ENCODE measurements at regions of chr3 and their contacts with region 1.

Region 1: DNA sequence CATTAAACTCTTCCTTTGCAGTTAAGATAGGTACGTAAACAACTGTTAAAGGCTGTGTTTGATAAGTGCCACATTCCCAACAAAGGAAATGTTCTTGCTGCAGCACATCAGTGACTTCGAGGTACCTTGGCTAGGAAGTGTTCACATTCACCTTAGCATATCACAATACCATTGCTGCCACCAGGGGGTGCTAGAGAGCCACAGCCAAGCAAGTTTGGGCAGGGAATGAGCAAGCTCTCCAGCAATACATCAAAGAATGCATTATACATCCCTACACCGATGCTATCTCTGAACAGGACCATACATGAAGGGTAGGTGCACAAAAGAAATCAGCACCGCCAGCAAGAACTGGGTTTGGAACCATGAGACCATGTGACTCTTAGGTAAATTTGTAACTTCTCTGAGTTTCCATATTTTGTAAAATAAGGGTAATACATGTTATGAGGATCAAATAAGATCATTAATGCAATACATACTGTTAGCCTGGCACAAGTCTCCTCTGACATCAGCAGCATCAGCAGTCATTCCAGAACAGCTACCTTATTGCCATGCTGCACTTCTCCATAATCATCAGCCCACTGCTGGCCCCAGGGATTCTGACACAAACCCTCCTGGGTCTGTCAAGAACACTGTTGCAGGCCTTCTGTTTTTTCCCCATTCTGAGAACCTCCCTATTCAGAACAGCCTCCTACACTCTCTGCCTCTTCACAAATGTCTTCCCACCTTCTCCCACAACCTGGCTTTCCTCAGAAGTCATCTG is 37.6 kb downstream of the RYK start:
- DNase-seq: peak; percentile 71 to 95 (median 83)
- ATAC-seq: peak; percentile 91
- H3K4me3 ChIP-seq: no peak overlapping the region
- H3K4me3 Mint-ChIP-seq: no peak overlapping the region
- H3K27ac ChIP-seq: no peak overlapping the region
- H3K27ac Mint-ChIP-seq: no peak overlapping the region
- H3K4me1 ChIP-seq: no peaks in the 10 kb centered on the region
- H3K4me1 Mint-ChIP-seq: peaks cover 38% of the 10 kb centered on the region
- H3K27me3 ChIP-seq: no peaks in the 10 kb centered on the region
- H3K27me3 Mint-ChIP-seq: no peaks in the 10 kb centered on the region
- CTCF ChIP-seq: peak; percentile 93

Region 2: DNA sequence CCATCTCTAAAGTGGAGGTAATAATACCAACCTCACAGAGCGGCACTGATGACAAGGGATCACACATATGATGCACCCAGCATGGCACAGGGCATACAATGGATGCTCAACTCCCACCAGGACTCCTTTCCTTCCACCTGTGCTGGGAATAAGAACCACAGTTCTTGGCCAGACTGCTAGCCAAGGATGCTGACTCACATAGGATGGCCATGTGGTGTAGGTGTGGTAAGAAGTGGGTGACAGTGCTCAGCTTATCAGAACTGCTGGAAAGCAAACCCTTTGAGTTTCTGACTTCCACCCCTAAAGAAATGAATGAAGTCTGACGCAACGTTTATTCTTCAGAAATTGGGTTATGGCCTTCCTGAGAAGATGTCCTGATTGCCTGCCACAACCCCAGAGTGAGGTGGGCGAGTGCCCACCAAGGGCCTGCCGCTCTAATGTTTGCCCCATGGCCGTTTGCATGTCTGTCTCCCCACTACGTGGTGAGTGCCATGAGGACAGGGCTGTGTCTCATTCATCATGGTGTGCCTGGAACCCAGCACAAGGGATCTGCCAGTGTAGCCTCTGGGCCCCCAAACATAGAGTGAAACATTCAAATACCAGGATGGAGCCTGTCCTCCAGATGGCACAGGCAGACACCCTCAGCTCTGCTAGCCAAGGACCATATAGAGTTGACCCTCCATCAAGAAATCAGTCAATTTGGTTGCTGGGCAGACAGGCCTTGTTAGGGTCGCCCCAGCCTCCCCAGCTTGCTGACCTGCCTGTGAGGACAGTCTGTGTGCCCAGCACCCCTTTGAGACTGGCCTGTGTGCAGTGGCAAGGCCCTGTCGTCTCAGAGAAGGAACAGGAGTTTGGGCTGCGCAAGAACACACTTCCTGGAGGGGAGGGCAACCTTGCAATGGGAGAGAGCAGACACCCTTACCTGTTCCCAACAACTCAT is 125.8 kb before region 1 on chr3:
- CTCF ChIA-PET with region 1: no interaction called
- POLR2A ChIA-PET with region 1: no interaction called
- intact Hi-C with region 1: no loop called
- DNase-seq: no peak
- ATAC-seq: no peak
- H3K4me3 ChIP-seq: no peak overlapping the region
- H3K4me3 Mint-ChIP-seq: no peak overlapping the region
- H3K27ac ChIP-seq: no peak overlapping the region
- H3K27ac Mint-ChIP-seq: no peak overlapping the region
- H3K4me1 ChIP-seq: no peaks in the 10 kb centered on the region
- H3K4me1 Mint-ChIP-seq: no peaks in the 10 kb centered on the region
- H3K27me3 ChIP-seq: no peaks in the 10 kb centered on the region
- H3K27me3 Mint-ChIP-seq: no peaks in the 10 kb centered on the region
- CTCF ChIP-seq: no peak

Region 3: GRCh38 chr3:134111616-134112015 is 101.5 kb before region 1 on chr3:
- CTCF ChIA-PET with region 1: no interaction called
- POLR2A ChIA-PET with region 1: no interaction called
- intact Hi-C with region 1: no loop called
- DNase-seq: no peak
- ATAC-seq: no peak
- H3K4me3 ChIP-seq: no peak overlapping the region
- H3K4me3 Mint-ChIP-seq: no peak overlapping the region
- H3K27ac ChIP-seq: no peak overlapping the region
- H3K27ac Mint-ChIP-seq: no peak overlapping the region
- H3K4me1 ChIP-seq: no peaks in the 10 kb centered on the region
- H3K4me1 Mint-ChIP-seq: peaks cover 5% of the 10 kb centered on the region
- H3K27me3 ChIP-seq: no peaks in the 10 kb centered on the region
- H3K27me3 Mint-ChIP-seq: peaks cover 7% of the 10 kb centered on the region
- CTCF ChIP-seq: no peak

Region 4: DNA sequence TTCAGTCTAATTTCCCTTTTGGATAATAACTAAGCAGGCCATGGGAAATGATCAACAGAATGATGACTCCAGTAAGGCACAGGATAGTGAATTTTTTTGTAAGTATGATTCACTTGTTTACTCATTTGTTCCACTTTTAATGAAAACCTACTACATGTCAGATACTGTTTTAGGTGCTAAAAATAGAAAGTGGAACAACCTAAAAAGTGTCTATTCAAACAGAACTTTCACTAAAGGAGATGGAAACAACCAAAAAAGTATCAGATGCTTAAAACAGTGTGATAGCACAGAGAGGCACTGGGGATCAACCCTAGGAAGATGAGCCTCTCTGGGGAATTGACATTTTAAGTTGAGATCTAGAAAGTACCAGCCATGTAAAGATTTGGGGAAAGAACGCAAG is 26.5 kb after region 1 on chr3:
- CTCF ChIA-PET with region 1: interaction called, 11 read pairs
- POLR2A ChIA-PET with region 1: no interaction called
- intact Hi-C with region 1: no loop called
- DNase-seq: no peak
- ATAC-seq: no peak
- H3K4me3 ChIP-seq: no peak overlapping the region
- H3K4me3 Mint-ChIP-seq: no peak overlapping the region
- H3K27ac ChIP-seq: no peak overlapping the region
- H3K27ac Mint-ChIP-seq: peak overlapping the region; percentile 30
- H3K4me1 ChIP-seq: peaks cover 28% of the 10 kb centered on the region
- H3K4me1 Mint-ChIP-seq: peaks cover 85% of the 10 kb centered on the region
- H3K27me3 ChIP-seq: no peaks in the 10 kb centered on the region
- H3K27me3 Mint-ChIP-seq: no peaks in the 10 kb centered on the region
- CTCF ChIP-seq: no peak

Region 5: GRCh38 chr3:134299185-134299887 is 86.2 kb after region 1 on chr3:
- CTCF ChIA-PET with region 1: interaction called, 17 read pairs
- POLR2A ChIA-PET with region 1: no interaction called
- intact Hi-C with region 1: loop called (anchors 1 to 5 kb)
- DNase-seq: no peak
- ATAC-seq: no peak
- H3K4me3 ChIP-seq: no peak overlapping the region
- H3K4me3 Mint-ChIP-seq: no peak overlapping the region
- H3K27ac ChIP-seq: no peak overlapping the region
- H3K27ac Mint-ChIP-seq: no peak overlapping the region
- H3K4me1 ChIP-seq: peaks cover 10% of the 10 kb centered on the region
- H3K4me1 Mint-ChIP-seq: no peaks in the 10 kb centered on the region
- H3K27me3 ChIP-seq: no peaks in the 10 kb centered on the region
- H3K27me3 Mint-ChIP-seq: peaks cover 17% of the 10 kb centered on the region
- CTCF ChIP-seq: no peak

Region 6: GRCh38 chr3:134373994-134374790 is 161.1 kb after region 1 on chr3 and contains the start of gene AMOTL2:
- CTCF ChIA-PET with region 1: interaction called, 13 read pairs
- POLR2A ChIA-PET with region 1: no interaction called
- intact Hi-C with region 1: loop called in 1 of 2 experiments (anchors 1 kb)
- DNase-seq: peak in 1 of 9 experiments; percentile 18
- ATAC-seq: no peak
- H3K4me3 ChIP-seq: peak within 1 kb of the TSS; percentile 8 to 30
- H3K4me3 Mint-ChIP-seq: peak within 1 kb of the TSS; percentile 81
- H3K27ac ChIP-seq: no peak within 1 kb of the TSS
- H3K27ac Mint-ChIP-seq: no peak within 1 kb of the TSS
- H3K4me1 ChIP-seq: peaks cover 6% of the 10 kb centered on the region
- H3K4me1 Mint-ChIP-seq: peaks cover 10% of the 10 kb centered on the region
- H3K27me3 ChIP-seq: peaks cover 5 to 7% of the 10 kb centered on the region in 2 experiments
- H3K27me3 Mint-ChIP-seq: peaks cover 36% of the 10 kb centered on the region
- CTCF ChIP-seq: no peak
- total RNA-seq, gene AMOTL2: not detected

Region 7: GRCh38 chr3:134432236-134432635 is 219.2 kb after region 1 on chr3:
- CTCF ChIA-PET with region 1: no interaction called
- POLR2A ChIA-PET with region 1: no interaction called
- intact Hi-C with region 1: no loop called
- DNase-seq: no peak
- ATAC-seq: no peak
- H3K4me3 ChIP-seq: no peak overlapping the region
- H3K4me3 Mint-ChIP-seq: no peak overlapping the region
- H3K27ac ChIP-seq: no peak overlapping the region
- H3K27ac Mint-ChIP-seq: no peak overlapping the region
- H3K4me1 ChIP-seq: no peaks in the 10 kb centered on the region
- H3K4me1 Mint-ChIP-seq: no peaks in the 10 kb centered on the region
- H3K27me3 ChIP-seq: peaks cover 0 to 2% of the 10 kb centered on the region in 2 experiments
- H3K27me3 Mint-ChIP-seq: peaks cover 11% of the 10 kb centered on the region
- CTCF ChIP-seq: no peak

Region 8: DNA sequence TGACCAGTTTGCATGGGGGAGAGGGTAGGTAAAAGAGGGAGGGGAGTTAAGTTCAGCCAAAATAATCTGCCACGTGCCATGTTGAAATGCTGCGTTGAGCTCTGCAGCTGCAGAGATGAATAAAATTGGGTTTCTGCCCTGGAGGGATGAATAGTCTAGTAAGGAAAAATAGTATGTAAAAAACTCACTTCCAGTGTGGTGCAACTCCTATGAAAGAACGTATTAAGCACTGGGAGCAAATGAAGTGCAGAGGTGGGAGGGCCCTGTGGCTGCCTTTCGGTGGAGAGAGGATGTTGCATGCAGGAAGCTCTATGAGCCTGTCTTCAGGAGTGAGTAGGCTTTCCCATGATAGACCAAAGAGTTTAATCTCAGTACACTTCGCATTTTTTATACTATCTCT is 281.4 kb after region 1 on chr3:
- CTCF ChIA-PET with region 1: interaction called, 10 read pairs
- POLR2A ChIA-PET with region 1: no interaction called
- intact Hi-C with region 1: loop called in 1 of 2 experiments (anchors 5 kb)
- DNase-seq: no peak
- ATAC-seq: no peak
- H3K4me3 ChIP-seq: no peak overlapping the region
- H3K4me3 Mint-ChIP-seq: no peak overlapping the region
- H3K27ac ChIP-seq: no peak overlapping the region
- H3K27ac Mint-ChIP-seq: no peak overlapping the region
- H3K4me1 ChIP-seq: no peaks in the 10 kb centered on the region
- H3K4me1 Mint-ChIP-seq: peaks cover 53% of the 10 kb centered on the region
- H3K27me3 ChIP-seq: no peaks in the 10 kb centered on the region
- H3K27me3 Mint-ChIP-seq: no peaks in the 10 kb centered on the region
- CTCF ChIP-seq: no peak